HEK293 (cell line): ENCODE measurements at regions of chr6 and their contacts with region 1.

Region 1: GRCh38 chr6:117829594-117830319 is 77.3 kb upstream of the SLC35F1 start:
- H3K4me3 ChIP-seq: peak overlapping the region; percentile 59
- H3K27ac ChIP-seq: no peak overlapping the region
- H3K4me1 ChIP-seq: no peaks in the 10 kb centered on the region
- CTCF ChIP-seq: peak; percentile 81

Region 2: GRCh38 chr6:117840541-117840983 is 10.8 kb after region 1 on chr6:
- CTCF ChIA-PET with region 1: interaction called, 15 read pairs
- POLR2A ChIA-PET with region 1: no interaction called
- H3K4me3 ChIP-seq: no peak overlapping the region
- H3K27ac ChIP-seq: no peak overlapping the region
- H3K4me1 ChIP-seq: no peaks in the 10 kb centered on the region
- CTCF ChIP-seq: 0 out of 2 replicates have a peak, but pooled peaks have one; percentile 39

Region 3: DNA sequence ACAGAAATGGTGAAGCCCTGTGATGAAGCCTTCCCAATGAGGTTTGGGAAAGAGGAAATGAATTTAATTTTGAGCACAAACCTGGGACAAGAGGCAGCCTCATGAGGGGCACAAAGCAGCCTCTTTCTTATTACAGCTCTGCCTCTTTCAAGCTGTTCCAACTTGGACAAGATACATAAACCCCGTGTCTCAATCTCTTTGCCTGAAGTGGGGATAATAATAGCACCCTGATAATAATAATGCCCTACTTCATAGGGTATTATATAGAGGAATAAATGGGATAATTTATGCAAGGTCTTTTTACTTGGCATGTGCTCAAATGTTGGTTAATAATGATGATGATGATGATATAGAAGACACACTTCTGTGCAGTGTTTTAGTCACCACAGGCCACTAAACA is 627.2 kb after region 1 on chr6:
- CTCF ChIA-PET with region 1: no interaction called
- POLR2A ChIA-PET with region 1: no interaction called
- H3K4me3 ChIP-seq: no peak overlapping the region
- H3K27ac ChIP-seq: no peak overlapping the region
- H3K4me1 ChIP-seq: no peaks in the 10 kb centered on the region
- CTCF ChIP-seq: no peak